Heart left ventricle (tissue), 16 donors: ENCODE measurements at regions of chr9 and their contacts with region 1.

Region 1: GRCh38 chr9:37693260-37693659 is 42.5 kb downstream of the FRMPD1 start:
- DNase-seq: no peak
- ATAC-seq: no peak
- H3K4me3 ChIP-seq: no peak overlapping the region
- H3K27ac ChIP-seq: no peak overlapping the region
- H3K4me1 ChIP-seq: no peaks in the 10 kb centered on the region
- H3K27me3 ChIP-seq: peaks cover 0 to 13% (median 0%) of the 10 kb centered on the region in 9 donors
- CTCF ChIP-seq: no peak
- POLR2A ChIP-seq: no peak

Region 2: GRCh38 chr9:37422289-37423104 is 270.8 kb before region 1 on chr9 and contains the start of gene GRHPR:
- intact Hi-C with region 1: no loop called
- DNase-seq: peak; percentile 91 to 96 (median 94)
- ATAC-seq: peak; percentile 93 to 99 (median 98)
- H3K4me3 ChIP-seq: peak within 1 kb of the TSS; percentile 61 to 98 (median 83)
- H3K27ac ChIP-seq: peak within 1 kb of the TSS; percentile 61 to 96 (median 89)
- H3K4me1 ChIP-seq: peaks cover 0 to 33% (median 28%) of the 10 kb centered on the region in 12 donors
- H3K27me3 ChIP-seq: no peaks in the 10 kb centered on the region
- CTCF ChIP-seq: no peak
- POLR2A ChIP-seq: peak in 1 of 2 donors; percentile 88
- total RNA-seq, gene GRHPR: 94.9 to 209 (median 111) TPM

Region 3: GRCh38 chr9:37706290-37706689 is 13.0 kb after region 1 on chr9:
- intact Hi-C with region 1: loop called in 1 of 10 experiments (anchors 2 kb)
- DNase-seq: no peak
- ATAC-seq: no peak
- H3K4me3 ChIP-seq: no peak overlapping the region
- H3K27ac ChIP-seq: no peak overlapping the region
- H3K4me1 ChIP-seq: no peaks in the 10 kb centered on the region
- H3K27me3 ChIP-seq: peaks cover 0 to 13% (median 0%) of the 10 kb centered on the region in 9 donors
- CTCF ChIP-seq: no peak
- POLR2A ChIP-seq: no peak